Heart left ventricle (tissue), 16 donors: ENCODE measurements at regions of chr10 and their contacts with region 1.

Region 1: DNA sequence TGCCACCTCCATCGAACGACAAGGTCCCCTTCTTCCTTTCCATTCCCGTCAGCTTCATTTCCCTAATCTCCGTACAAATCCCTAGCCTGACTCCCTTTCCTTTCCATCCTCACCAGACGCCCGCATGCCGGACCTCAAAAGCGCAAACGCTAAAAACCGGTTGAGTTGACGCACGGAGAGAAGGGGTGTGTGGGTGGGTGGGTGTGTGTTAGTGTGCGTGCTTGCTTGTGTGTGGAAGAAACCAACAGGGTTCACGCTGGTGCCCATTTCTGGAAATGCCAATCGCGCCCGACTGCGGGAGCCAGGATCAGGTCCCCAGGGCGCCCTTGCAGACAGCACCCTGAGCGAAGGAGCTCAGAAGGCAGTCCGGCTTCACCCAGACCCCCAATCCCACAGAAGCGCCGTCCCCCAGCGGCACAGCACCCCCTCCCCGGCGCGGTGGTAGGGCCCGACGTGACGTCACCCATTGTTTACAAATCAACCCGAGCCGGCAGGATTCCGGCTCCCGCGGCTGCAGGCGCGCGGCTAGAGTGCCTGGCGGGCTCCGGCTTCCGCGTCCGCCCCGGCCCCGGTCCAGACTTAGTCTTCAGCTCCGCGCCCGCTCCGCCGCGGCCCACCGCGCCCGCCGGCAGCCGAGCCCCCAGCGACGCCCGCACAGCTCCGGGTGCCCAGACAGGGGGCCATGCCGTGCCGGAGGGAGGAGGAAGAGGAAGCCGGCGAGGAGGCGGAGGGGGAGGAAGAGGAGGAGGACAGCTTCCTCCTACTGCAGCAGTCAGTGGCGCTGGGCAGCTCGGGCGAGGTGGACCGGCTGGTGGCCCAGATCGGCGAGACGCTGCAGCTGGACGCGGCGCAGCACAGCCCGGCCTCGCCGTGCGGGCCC is at the start of gene FRAT1:
- DNase-seq: peak; percentile 90 to 95 (median 92)
- ATAC-seq: peak; percentile 74 to 93 (median 90)
- H3K4me3 ChIP-seq: peak within 1 kb of the TSS; percentile 66 to 98 (median 84)
- H3K27ac ChIP-seq: peak within 1 kb of the TSS; percentile 93 to 100 (median 98)
- H3K4me1 ChIP-seq: peaks cover 0 to 50% (median 20%) of the 10 kb centered on the region in 12 donors
- H3K27me3 ChIP-seq: no peaks in the 10 kb centered on the region
- CTCF ChIP-seq: no peak
- POLR2A ChIP-seq: peak in 1 of 2 donors; percentile 84
- total RNA-seq, gene FRAT1: 2.0 to 5.2 (median 4.4) TPM

Region 2: DNA sequence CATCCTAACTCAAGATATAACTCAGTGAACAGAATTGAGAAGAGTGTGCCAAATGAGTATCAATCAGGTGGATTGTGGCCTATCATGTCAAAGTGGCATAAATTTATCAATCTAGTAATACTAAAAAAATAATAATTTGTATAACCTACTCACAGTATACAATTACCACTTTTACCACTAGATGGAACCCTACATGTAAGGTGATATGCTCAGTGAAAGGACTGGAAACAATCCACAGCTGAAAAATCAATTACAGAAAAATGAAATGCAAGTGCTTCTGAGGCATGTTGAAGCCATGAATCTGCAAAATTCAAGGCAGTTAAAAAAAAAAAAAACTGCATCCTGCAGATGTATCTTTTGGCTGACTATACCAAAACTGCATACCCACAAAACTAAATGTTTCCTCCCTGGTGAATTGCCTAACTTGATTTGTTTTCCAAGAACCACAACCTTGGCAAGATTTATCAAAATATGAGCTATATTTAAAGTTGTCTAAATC is 40.5 kb before region 1 on chr10:
- intact Hi-C with region 1: loop called in 4 of 10 experiments (anchors 2 to 10 kb)
- DNase-seq: no peak
- ATAC-seq: peak; percentile 83 to 94 (median 90)
- H3K4me3 ChIP-seq: no peak overlapping the region
- H3K27ac ChIP-seq: peak overlapping the region in 10 of 12 donors; percentile 11 to 64 (median 44)
- H3K4me1 ChIP-seq: peaks cover 0 to 25% (median 11%) of the 10 kb centered on the region in 12 donors
- H3K27me3 ChIP-seq: no peaks in the 10 kb centered on the region
- CTCF ChIP-seq: peak; percentile 60 to 83 (median 72)
- POLR2A ChIP-seq: no peak

Region 3: GRCh38 chr10:97292097-97292862 is 26.7 kb before region 1 on chr10 and contains the start of gene ARHGAP19:
- intact Hi-C with region 1: loop called in 1 of 10 experiments (anchors 2 kb)
- DNase-seq: peak; percentile 94 to 98 (median 97)
- ATAC-seq: peak; percentile 99 to 100 (median 99)
- H3K4me3 ChIP-seq: peak within 1 kb of the TSS; percentile 70 to 100 (median 90)
- H3K27ac ChIP-seq: peak within 1 kb of the TSS; percentile 75 to 98 (median 95)
- H3K4me1 ChIP-seq: peaks cover 0 to 12% (median 8%) of the 10 kb centered on the region in 12 donors
- H3K27me3 ChIP-seq: no peaks in the 10 kb centered on the region
- CTCF ChIP-seq: peak in 3 of 12 donors; percentile 6 to 30 (median 19)
- POLR2A ChIP-seq: peak in 1 of 2 donors; percentile 75
- total RNA-seq, gene ARHGAP19: 3.0 to 7.4 (median 4.1) TPM

Region 4: DNA sequence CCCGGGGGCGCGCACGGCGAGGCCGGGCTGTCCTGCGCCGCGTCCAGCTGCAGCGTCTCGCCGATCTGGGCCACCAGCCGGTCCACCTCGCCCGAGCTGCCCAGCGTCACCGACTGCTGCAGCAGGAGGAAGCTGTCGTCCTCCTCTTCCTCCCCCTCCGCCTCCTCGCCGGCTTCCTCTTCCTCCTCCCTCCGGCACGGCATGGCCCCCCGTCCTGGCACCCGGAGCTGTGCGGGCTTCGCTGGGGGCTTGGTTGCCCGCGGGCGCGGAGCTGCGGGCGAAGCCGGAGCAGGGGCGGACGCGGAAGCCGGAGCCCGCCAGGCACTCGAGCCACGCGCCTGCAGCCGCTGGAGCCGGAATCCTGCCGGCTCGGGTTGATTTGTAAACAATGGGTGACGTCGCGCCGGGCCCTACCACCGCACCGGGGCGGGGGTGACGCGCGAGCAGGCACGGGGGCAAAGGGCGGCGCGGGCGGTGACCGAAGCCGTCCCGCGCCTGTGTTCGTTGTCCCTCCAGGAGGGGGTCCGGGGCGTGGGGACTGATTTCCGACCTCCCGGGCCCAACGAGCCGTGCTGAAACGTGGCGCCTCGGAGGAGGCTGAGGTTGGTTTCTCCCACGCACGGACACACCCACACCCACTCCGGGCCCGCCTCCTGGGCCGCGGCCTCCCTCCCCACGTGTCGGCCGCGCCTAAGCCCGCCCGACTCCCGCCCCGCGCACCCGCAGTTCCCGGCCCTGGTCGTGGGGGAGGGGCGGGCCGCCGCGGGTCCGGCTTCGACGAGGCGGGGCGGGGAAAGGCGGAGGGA is 15.6 kb after region 1 on chr10 and contains the start of gene FRAT2:
- intact Hi-C with region 1: loop called in 5 of 10 experiments (anchors 1 to 2 kb)
- DNase-seq: peak; percentile 93 to 96 (median 94)
- ATAC-seq: peak; percentile 94 to 97 (median 96)
- H3K4me3 ChIP-seq: peak within 1 kb of the TSS; percentile 67 to 100 (median 90)
- H3K27ac ChIP-seq: peak within 1 kb of the TSS; percentile 88 to 99 (median 95)
- H3K4me1 ChIP-seq: peaks cover 2 to 68% (median 38%) of the 10 kb centered on the region in 12 donors
- H3K27me3 ChIP-seq: no peaks in the 10 kb centered on the region
- CTCF ChIP-seq: no peak
- POLR2A ChIP-seq: peak in 1 of 2 donors; percentile 83
- total RNA-seq, gene FRAT2: 4.4 to 12.4 (median 7.5) TPM

Region 5: DNA sequence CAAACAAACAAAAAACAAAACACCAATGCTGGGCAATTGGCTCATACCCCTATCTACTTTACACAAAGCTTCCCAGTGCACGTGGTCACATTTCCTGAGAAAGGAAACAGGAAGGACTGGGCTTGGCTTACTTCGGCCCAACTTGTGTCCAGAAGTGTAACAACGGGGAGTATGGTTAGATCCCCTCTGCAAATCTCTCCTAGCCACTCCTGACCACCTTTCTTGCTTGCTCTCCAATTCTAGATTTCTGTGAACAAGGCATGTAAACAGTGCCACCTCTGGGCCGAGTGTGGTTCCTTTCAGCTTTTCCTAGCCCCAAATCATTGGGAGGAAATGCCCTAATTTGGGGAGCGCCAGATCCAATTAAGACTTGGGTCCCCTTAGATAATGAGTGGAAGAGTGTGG is 36.6 kb after region 1 on chr10:
- intact Hi-C with region 1: loop called in 1 of 10 experiments (anchors 2 kb)
- DNase-seq: no peak
- ATAC-seq: peak in 3 of 4 donors; percentile 32 to 75 (median 65)
- H3K4me3 ChIP-seq: no peak overlapping the region
- H3K27ac ChIP-seq: peak overlapping the region in 7 of 12 donors; percentile 11 to 73 (median 33)
- H3K4me1 ChIP-seq: peaks cover 0 to 33% (median 8%) of the 10 kb centered on the region in 12 donors
- H3K27me3 ChIP-seq: no peaks in the 10 kb centered on the region
- CTCF ChIP-seq: peak in 11 of 12 donors; percentile 13 to 60 (median 45)
- POLR2A ChIP-seq: no peak

Region 6: DNA sequence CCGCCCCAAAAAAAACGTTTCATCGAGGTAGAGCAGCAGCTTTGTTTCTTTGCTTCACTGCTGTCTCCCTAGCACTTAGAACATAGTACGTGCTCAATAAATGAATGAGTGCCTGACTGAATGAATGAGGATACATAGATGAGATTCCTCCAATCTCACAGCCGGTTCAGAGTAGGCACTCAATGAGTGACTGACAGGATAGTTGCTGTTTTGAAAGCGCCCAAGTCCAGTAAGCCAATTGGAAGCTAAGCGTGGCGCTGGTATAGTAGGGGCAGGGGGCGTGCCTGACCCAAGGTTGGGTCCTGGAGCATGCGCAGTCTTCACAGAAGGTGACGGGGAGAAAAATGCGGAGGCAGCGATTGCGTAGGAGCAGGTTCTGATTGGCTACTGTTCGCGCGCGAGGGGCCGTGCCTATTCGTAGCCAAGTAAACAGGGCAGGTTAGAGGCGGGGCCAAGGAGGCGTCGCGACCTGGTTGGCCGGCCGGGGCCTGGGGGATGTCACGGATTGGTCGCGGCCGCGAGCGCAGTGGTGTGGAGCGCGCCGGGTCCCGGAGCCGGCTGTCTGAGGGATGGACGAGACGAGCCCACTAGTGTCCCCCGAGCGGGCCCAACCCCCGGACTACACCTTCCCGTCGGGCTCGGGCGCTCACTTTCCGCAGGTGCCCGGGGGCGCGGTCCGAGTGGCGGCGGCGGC is 321.3 kb after region 1 on chr10 and contains the start of gene PI4K2A:
- intact Hi-C with region 1: no loop called
- DNase-seq: peak; percentile 99 to 100 (median 99)
- ATAC-seq: peak; percentile 99 to 100 (median 100)
- H3K4me3 ChIP-seq: peak within 1 kb of the TSS; percentile 32 to 93 (median 84)
- H3K27ac ChIP-seq: peak within 1 kb of the TSS; percentile 41 to 90 (median 78)
- H3K4me1 ChIP-seq: peaks cover 0 to 21% (median 12%) of the 10 kb centered on the region in 12 donors
- H3K27me3 ChIP-seq: no peaks in the 10 kb centered on the region
- CTCF ChIP-seq: no peak
- POLR2A ChIP-seq: peak; percentile 70 to 92
- total RNA-seq, gene PI4K2A: 10.4 to 24.2 (median 17.3) TPM